ENCODE measurements at regions of chr14 and their contacts with region 1.

Region 1: DNA sequence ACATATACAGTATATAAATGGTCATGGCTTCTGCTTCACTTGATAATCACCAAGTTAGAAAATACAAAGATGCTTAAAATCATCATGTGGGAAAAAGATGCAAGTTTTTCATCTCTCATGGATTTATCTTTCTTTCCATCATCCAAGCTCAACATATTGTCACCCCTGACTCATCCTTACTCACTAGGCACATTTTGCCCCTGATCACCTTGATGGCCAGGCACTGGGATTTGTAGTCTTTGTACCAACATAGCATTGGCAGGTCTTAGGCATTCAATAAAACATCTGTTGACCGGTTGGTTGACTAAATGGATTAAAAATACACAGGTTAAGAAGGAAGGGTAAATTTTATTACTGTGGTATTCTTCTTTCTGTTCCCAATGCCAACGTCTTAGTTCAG is 28.1 kb downstream of the KLHDC2 start:
- DNase-seq: no peak
- H3K4me3 Mint-ChIP-seq: no peak overlapping the region
- H3K27ac Mint-ChIP-seq: no peak overlapping the region
- H3K4me1 Mint-ChIP-seq: peaks cover 1% of the 10 kb centered on the region
- H3K27me3 Mint-ChIP-seq: no peaks in the 10 kb centered on the region

Region 2: GRCh38 chr14:49820176-49820575 is 24.2 kb after region 1 on chr14:
- intact Hi-C with region 1: loop called (anchors 1 kb)
- DNase-seq: no peak
- H3K4me3 Mint-ChIP-seq: no peak overlapping the region
- H3K27ac Mint-ChIP-seq: no peak overlapping the region
- H3K4me1 Mint-ChIP-seq: peaks cover 3% of the 10 kb centered on the region
- H3K27me3 Mint-ChIP-seq: no peaks in the 10 kb centered on the region

Region 3: GRCh38 chr14:50920482-50921230 is 1124.6 kb after region 1 on chr14:
- intact Hi-C with region 1: no loop called
- DNase-seq: no peak
- H3K4me3 Mint-ChIP-seq: no peak overlapping the region
- H3K27ac Mint-ChIP-seq: no peak overlapping the region
- H3K4me1 Mint-ChIP-seq: no peaks in the 10 kb centered on the region
- H3K27me3 Mint-ChIP-seq: peaks cover 11% of the 10 kb centered on the region

Measured in activated CD4-positive, alpha-beta T cell treated with anti-CD3 and anti-CD28 coated beads, Interleukin-2, amount 10 ng/mL, durations not matched to agents 24 days and 14 days (primary cell).